H1 (cell line): ENCODE measurements at regions of chr1 and their contacts with region 1.

Region 1: GRCh38 chr1:156751758-156752757 is 583 bp upstream of the HDGF start:
- DNase-seq: peak; percentile 91 to 93
- H3K4me3 ChIP-seq: peak overlapping the region; percentile 86 to 100 (median 95)
- H3K27ac ChIP-seq: peak overlapping the region; percentile 85
- H3K4me1 ChIP-seq: peaks cover 24 to 36% (median 27%) of the 10 kb centered on the region in 4 experiments
- H3K27me3 ChIP-seq: no peaks in the 10 kb centered on the region
- CTCF ChIP-seq: no peak; a peak in 1 of 4 replicates
- EP300 ChIP-seq: peak in 1 of 2 experiments; percentile 84; a peak in 1 of 3 replicates
- POLR2A ChIP-seq: peak; percentile 65 to 79; a peak in 2 of 3 replicates
- RAD21 ChIP-seq: no peak

Region 2: GRCh38 chr1:156740679-156741612 is 11.1 kb before region 1 on chr1 and contains the start of gene MRPL24:
- CTCF ChIA-PET with region 1: interaction called, 9 read pairs
- POLR2A ChIA-PET with region 1: interaction called, 214 read pairs
- DNase-seq: peak; percentile 93 to 99
- H3K4me3 ChIP-seq: peak within 1 kb of the TSS; percentile 55 to 95 (median 84)
- H3K27ac ChIP-seq: peak within 1 kb of the TSS; percentile 72
- H3K4me1 ChIP-seq: peaks cover 3 to 16% (median 7%) of the 10 kb centered on the region in 4 experiments; a peak in 6 of 7 replicates
- H3K27me3 ChIP-seq: no peaks in the 10 kb centered on the region
- CTCF ChIP-seq: peak in 1 of 3 experiments; percentile 12; a peak in 1 of 4 replicates
- EP300 ChIP-seq: no peak
- POLR2A ChIP-seq: peak; percentile 58 to 88
- RAD21 ChIP-seq: 0 out of 4 replicates have a peak, but pooled peaks of 1 of the 2 experiments have one; percentile 19
- total RNA-seq, gene MRPL24: 34.4 and 35.2 TPM in 2 replicates